A549 (cell line): ENCODE measurements at regions of chr20 and their contacts with region 1.

Region 1: GRCh38 chr20:32779500-32780211 is 17.5 kb downstream of the DNMT3B start:
- DNase-seq: no peak
- ATAC-seq: no peak
- H3K4me3 ChIP-seq: no peak overlapping the region
- H3K27ac ChIP-seq: 0 out of 6 replicates have a peak overlapping the region, but pooled peaks of 1 of the 2 experiments have one; percentile 12
- H3K4me1 ChIP-seq: peaks cover 39% of the 10 kb centered on the region
- CTCF ChIP-seq: no peak
- EP300 ChIP-seq: no peak
- POLR2A ChIP-seq: no peak
- RAD21 ChIP-seq: no peak

Region 2: DNA sequence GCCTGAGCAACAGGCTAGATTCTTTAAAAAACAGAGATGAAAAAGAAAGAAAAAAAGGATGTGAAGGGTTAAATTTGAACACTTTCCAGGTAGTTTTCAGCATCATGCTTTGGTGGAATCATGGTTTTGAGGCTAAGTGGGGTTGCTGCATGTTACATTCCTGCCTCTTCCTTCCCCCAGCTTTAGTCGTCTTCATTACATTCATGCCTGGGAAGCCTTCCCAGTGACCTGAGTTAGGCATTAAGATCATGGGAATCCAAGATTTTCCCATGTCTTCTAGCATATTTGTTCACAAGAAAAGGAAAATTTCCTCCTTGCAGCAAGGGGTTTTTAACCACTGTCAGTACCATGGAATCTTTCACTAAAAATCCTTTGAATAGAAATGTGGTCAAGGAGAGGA is 1028.5 kb before region 1 on chr20:
- CTCF ChIA-PET with region 1: no interaction called
- POLR2A ChIA-PET with region 1: no interaction called
- DNase-seq: no peak
- ATAC-seq: no peak
- H3K4me3 ChIP-seq: no peak overlapping the region
- H3K27ac ChIP-seq: no peak overlapping the region
- H3K4me1 ChIP-seq: peaks cover 11% of the 10 kb centered on the region; the same call in 2 of the 3 replicates
- CTCF ChIP-seq: no peak
- EP300 ChIP-seq: no peak
- POLR2A ChIP-seq: no peak
- RAD21 ChIP-seq: no peak

Region 3: GRCh38 chr20:32521780-32522525 is 257.7 kb before region 1 on chr20:
- CTCF ChIA-PET with region 1: interaction called, 19 read pairs
- POLR2A ChIA-PET with region 1: no interaction called
- DNase-seq: peak; percentile 51 to 79
- ATAC-seq: peak; percentile 87 to 96
- H3K4me3 ChIP-seq: no peak overlapping the region
- H3K27ac ChIP-seq: no peak overlapping the region
- H3K4me1 ChIP-seq: no peaks in the 10 kb centered on the region
- CTCF ChIP-seq: peak; percentile 93
- EP300 ChIP-seq: no peak
- POLR2A ChIP-seq: no peak
- RAD21 ChIP-seq: peak; percentile 97 to 98

Region 4: GRCh38 chr20:32709632-32710121 is 70.0 kb before region 1 on chr20:
- CTCF ChIA-PET with region 1: interaction called, 10 read pairs
- POLR2A ChIA-PET with region 1: no interaction called
- DNase-seq: no peak
- ATAC-seq: peak in 1 of 2 experiments; percentile 62; a peak in 3 of 6 replicates
- H3K4me3 ChIP-seq: no peak overlapping the region
- H3K27ac ChIP-seq: peak overlapping the region in 1 of 2 experiments; percentile 53; a peak in 3 of 6 replicates
- H3K4me1 ChIP-seq: peaks cover 27% of the 10 kb centered on the region
- CTCF ChIP-seq: no peak
- EP300 ChIP-seq: no peak
- POLR2A ChIP-seq: no peak
- RAD21 ChIP-seq: no peak

Region 5: DNA sequence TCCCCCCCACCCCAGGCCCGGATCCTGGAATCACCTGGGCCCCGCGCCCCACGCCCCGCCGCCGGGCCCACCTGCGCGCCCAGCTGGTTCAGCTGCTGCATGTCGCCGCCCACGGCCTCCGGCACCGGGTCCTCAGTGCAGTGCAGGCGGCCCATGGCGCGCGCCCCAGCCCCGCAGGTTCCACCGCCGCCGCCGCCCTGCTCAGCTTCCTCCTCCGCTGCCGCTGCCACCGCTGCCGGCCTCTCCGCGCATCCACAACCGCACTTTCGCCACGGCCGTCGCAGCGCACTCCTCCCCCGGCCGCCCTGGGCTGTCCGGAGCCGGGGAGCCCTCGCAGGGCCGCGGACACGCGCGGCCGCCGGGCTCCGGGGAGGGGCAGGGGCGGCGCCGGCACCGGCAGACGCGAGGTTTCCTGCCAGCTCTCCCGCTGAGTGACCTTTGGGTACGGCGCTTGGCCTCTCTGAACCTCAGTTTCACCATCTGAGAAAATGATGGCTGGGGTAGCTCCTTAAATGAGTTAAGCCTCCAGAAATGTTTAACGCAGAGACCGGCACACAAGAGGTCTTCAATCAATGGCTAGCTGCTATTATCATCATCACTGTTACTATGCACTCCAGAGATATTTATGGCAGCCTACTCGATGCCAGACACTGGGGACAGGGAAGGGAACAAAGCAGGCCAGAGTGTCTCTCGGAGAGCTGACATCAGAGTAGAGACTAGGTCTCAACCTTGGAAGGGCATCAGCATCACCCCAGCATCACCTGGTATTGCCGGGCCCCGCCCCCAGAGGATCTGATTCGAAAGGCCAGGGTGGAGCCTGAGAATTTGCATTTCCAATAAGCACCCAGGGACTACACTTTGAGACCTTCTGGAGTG is 36.2 kb before region 1 on chr20 and contains the start of gene COMMD7:
- CTCF ChIA-PET with region 1: interaction called, 21 read pairs
- POLR2A ChIA-PET with region 1: interaction called, 4 read pairs
- DNase-seq: peak in 1 of 2 experiments; percentile 69
- ATAC-seq: peak; percentile 62 to 80
- H3K4me3 ChIP-seq: peak within 1 kb of the TSS; percentile 64
- H3K27ac ChIP-seq: peak within 1 kb of the TSS; percentile 88 to 97
- H3K4me1 ChIP-seq: peaks cover 38% of the 10 kb centered on the region
- CTCF ChIP-seq: no peak
- EP300 ChIP-seq: no peak
- POLR2A ChIP-seq: peak; percentile 33
- RAD21 ChIP-seq: 0 out of 5 replicates have a peak, but pooled peaks of 1 of the 2 experiments have one; percentile 11
- polyA plus RNA-seq, gene COMMD7: 74.1 and 86.3 TPM in 2 replicates

Region 6: GRCh38 chr20:32762149-32762753 is 17.4 kb before region 1 on chr20 and contains the start of gene DNMT3B:
- CTCF ChIA-PET with region 1: interaction called, 127 read pairs
- POLR2A ChIA-PET with region 1: interaction called, 5 read pairs
- DNase-seq: peak; percentile 84 to 85
- ATAC-seq: peak; percentile 86
- H3K4me3 ChIP-seq: peak within 1 kb of the TSS; percentile 99
- H3K27ac ChIP-seq: peak within 1 kb of the TSS; percentile 93 to 99
- H3K4me1 ChIP-seq: peaks cover 37% of the 10 kb centered on the region
- CTCF ChIP-seq: peak; percentile 53
- EP300 ChIP-seq: no peak
- POLR2A ChIP-seq: peak; percentile 83
- RAD21 ChIP-seq: peak; percentile 11 to 62; a peak in 4 of 5 replicates
- polyA plus RNA-seq, gene DNMT3B: 5.2 and 6.2 TPM in 2 replicates

Region 7: DNA sequence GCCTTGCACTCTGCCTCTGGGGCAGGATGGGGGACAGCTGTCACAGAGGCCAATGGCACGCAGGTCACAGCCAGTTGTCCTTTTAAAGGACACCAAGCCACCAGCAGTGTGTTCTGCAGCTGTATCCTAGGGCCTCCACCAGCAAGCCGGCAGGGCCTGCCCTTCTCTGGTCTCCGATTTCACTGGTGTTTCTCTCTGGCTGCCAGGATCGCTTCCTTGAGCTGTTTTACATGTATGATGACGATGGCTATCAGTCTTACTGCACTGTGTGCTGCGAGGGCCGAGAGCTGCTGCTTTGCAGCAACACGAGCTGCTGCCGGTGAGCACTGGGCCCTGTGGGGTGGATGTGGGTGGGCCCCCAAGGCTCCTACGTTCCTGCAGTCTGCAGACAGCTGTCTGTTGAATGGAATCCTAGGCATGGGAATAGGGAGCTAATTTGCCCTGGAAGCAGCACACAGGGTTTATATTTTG is 17.4 kb after region 1 on chr20:
- CTCF ChIA-PET with region 1: interaction called, 82 read pairs
- POLR2A ChIA-PET with region 1: no interaction called
- DNase-seq: no peak
- ATAC-seq: no peak
- H3K4me3 ChIP-seq: no peak overlapping the region
- H3K27ac ChIP-seq: no peak overlapping the region
- H3K4me1 ChIP-seq: no peaks in the 10 kb centered on the region
- CTCF ChIP-seq: no peak
- EP300 ChIP-seq: no peak
- POLR2A ChIP-seq: no peak
- RAD21 ChIP-seq: no peak

Region 8: DNA sequence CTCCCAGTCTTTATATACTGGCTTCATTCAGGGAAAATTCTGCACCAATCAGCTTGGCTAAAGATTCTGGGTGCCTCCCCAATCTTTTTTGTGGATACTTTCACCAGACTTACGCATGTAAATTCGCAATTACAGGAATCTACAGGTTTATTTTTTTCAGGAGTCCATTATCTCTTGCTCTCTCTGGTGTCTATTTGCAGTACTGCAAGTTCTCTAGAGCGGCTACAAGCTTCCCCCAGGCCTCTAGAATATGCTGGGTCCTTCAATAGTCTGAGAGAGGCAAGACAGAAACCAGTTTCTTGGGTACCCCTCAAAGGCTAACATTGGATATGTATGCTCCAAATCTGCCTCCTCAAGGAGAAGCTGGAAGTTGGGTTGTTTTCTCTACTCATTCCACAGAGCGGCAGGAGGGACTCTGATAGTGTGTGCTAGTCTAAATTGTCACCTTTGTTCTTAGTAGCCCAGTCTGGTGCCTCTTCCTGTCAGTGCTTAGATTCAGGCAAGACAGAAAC is 166.1 kb after region 1 on chr20:
- CTCF ChIA-PET with region 1: no interaction called
- POLR2A ChIA-PET with region 1: no interaction called
- DNase-seq: peak in 1 of 2 experiments; percentile 23
- ATAC-seq: peak; percentile 72 to 78; a peak in 5 of 6 replicates
- H3K4me3 ChIP-seq: no peak overlapping the region
- H3K27ac ChIP-seq: no peak overlapping the region
- H3K4me1 ChIP-seq: no peaks in the 10 kb centered on the region
- CTCF ChIP-seq: peak; percentile 37; the same call in 2 of the 3 replicates
- EP300 ChIP-seq: no peak
- POLR2A ChIP-seq: no peak
- RAD21 ChIP-seq: peak; percentile 27 to 32; a peak in 3 of 5 replicates